Naive thymus-derived CD4-positive, alpha-beta T cell (primary cell): ENCODE measurements at regions of chr15 and their contacts with region 1.

Region 1: GRCh38 chr15:59688841-59689625 is at the start of gene BNIP2:
- DNase-seq: peak; percentile 94 to 100 (median 99)
- ATAC-seq: peak; percentile 95
- H3K4me3 ChIP-seq: peak within 1 kb of the TSS; percentile 97
- H3K4me3 Mint-ChIP-seq: peak within 1 kb of the TSS; percentile 90 to 98 (median 96)
- H3K27ac ChIP-seq: peak within 1 kb of the TSS; percentile 97
- H3K27ac Mint-ChIP-seq: peak within 1 kb of the TSS; percentile 81 to 99 (median 99)
- H3K4me1 ChIP-seq: peaks cover 29 to 30% of the 10 kb centered on the region in 2 donors
- H3K4me1 Mint-ChIP-seq: peaks cover 35 to 57% (median 49%) of the 10 kb centered on the region in 7 donors
- H3K27me3 ChIP-seq: no peaks in the 10 kb centered on the region
- H3K27me3 Mint-ChIP-seq: no peaks in the 10 kb centered on the region
- total RNA-seq, gene BNIP2: 76.1 to 116 (median 87.0) TPM

Region 2: DNA sequence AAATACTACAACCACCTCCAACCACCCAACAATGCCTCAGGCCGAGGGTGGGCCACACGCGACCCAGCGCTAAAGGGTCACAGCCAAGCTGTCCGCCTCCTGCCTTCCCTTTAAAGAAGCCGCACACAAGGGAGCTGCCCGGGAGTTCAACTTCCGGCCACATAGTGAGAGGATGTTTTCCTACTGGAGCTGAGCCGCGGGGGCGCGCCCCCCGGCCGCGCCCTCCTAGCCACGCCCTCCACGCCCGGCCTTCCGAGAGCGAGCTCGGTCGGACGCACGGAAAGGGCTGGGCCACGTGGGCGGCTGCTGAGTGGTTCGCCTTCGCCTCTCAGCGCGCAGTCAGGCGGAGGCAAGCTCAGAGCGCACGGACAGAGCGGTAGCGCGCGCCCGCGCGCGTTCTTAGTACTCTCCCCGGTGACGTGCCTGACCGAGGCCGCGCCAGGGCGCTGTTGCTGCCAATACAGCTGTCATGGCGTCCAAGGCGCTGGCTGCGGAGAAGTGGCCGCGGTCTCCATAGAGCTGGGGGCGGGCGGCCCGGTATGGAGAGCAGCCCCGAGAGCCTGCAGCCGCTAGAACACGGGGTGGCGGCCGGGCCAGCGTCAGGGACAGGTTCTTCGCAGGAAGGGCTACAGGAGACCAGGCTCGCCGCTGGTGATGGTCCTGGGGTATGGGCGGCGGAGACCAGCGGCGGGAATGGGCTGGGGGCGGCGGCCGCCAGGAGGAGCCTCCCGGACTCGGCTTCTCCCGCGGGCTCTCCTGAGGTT is 918.0 kb before region 1 on chr15 and contains the start of gene MINDY2:
- CTCF ChIA-PET with region 1: no interaction called
- POLR2A ChIA-PET with region 1: no interaction called
- intact Hi-C with region 1: loop called (anchors 2 to 5 kb)
- DNase-seq: peak; percentile 85 to 92 (median 90)
- ATAC-seq: peak; percentile 98
- H3K4me3 ChIP-seq: peak within 1 kb of the TSS; percentile 83
- H3K4me3 Mint-ChIP-seq: peak within 1 kb of the TSS in 2 of 10 donors; percentile 2 to 20
- H3K27ac ChIP-seq: peak within 1 kb of the TSS; percentile 90
- H3K27ac Mint-ChIP-seq: peak within 1 kb of the TSS in 7 of 9 donors; percentile 86 to 96 (median 93)
- H3K4me1 ChIP-seq: peaks cover 24 to 32% of the 10 kb centered on the region in 2 donors
- H3K4me1 Mint-ChIP-seq: peaks cover 0 to 21% (median 9%) of the 10 kb centered on the region in 7 donors
- H3K27me3 ChIP-seq: no peaks in the 10 kb centered on the region
- H3K27me3 Mint-ChIP-seq: no peaks in the 10 kb centered on the region
- total RNA-seq, gene MINDY2: 10.4 to 16.6 (median 11.5) TPM

Region 3: DNA sequence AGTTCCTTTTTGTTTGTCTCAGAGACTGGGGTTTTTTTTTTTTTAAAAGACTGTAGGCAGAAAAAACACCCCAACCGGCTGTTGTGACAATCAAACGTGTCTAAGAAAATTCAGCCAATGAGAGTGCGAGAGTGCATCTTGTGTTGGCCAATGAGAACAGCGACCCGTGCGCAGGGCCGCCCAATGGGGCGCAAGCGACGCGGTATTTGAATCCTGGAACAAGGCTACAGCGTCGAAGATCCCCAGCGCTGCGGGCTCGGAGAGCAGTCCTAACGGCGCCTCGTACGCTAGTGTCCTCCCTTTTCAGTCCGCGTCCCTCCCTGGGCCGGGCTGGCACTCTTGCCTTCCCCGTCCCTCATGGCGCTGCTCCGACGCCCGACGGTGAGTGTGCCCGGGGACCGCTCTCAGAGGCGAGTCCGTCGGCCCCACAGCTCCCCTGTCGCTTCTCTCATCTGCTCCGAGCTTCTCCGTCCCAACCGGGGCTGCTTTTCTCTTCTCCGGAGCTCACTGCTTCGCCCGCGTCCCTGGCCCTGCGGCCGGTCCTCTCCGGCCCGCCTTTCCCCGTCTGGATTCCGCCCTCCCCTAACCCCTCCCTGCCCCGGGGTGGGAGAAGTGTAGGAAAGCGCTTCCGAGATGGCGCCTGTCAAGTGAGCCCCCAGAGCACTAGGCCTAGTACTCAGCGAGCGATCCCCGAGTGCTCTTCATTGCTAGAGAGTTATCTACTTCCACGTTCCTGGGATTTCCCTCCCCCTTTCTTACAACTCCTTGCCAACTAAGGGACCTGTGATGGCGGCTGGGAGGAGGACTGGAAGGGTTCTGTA is 583.9 kb before region 1 on chr15 and contains the start of gene CCNB2:
- CTCF ChIA-PET with region 1: no interaction called
- POLR2A ChIA-PET with region 1: no interaction called
- intact Hi-C with region 1: loop called in 1 of 2 experiments (anchors 10 kb)
- DNase-seq: peak; percentile 63 to 91 (median 87)
- ATAC-seq: peak; percentile 100
- H3K4me3 ChIP-seq: peak within 1 kb of the TSS; percentile 77
- H3K4me3 Mint-ChIP-seq: peak within 1 kb of the TSS; percentile 89 to 100 (median 93)
- H3K27ac ChIP-seq: peak within 1 kb of the TSS; percentile 71
- H3K27ac Mint-ChIP-seq: peak within 1 kb of the TSS; percentile 94 to 100 (median 98)
- H3K4me1 ChIP-seq: peaks cover 7 to 11% of the 10 kb centered on the region in 2 donors
- H3K4me1 Mint-ChIP-seq: peaks cover 9 to 49% (median 13%) of the 10 kb centered on the region in 7 donors
- H3K27me3 ChIP-seq: no peaks in the 10 kb centered on the region
- H3K27me3 Mint-ChIP-seq: no peaks in the 10 kb centered on the region
- total RNA-seq, gene CCNB2: 0.27 to 52.2 (median 0.41) TPM

Region 4: DNA sequence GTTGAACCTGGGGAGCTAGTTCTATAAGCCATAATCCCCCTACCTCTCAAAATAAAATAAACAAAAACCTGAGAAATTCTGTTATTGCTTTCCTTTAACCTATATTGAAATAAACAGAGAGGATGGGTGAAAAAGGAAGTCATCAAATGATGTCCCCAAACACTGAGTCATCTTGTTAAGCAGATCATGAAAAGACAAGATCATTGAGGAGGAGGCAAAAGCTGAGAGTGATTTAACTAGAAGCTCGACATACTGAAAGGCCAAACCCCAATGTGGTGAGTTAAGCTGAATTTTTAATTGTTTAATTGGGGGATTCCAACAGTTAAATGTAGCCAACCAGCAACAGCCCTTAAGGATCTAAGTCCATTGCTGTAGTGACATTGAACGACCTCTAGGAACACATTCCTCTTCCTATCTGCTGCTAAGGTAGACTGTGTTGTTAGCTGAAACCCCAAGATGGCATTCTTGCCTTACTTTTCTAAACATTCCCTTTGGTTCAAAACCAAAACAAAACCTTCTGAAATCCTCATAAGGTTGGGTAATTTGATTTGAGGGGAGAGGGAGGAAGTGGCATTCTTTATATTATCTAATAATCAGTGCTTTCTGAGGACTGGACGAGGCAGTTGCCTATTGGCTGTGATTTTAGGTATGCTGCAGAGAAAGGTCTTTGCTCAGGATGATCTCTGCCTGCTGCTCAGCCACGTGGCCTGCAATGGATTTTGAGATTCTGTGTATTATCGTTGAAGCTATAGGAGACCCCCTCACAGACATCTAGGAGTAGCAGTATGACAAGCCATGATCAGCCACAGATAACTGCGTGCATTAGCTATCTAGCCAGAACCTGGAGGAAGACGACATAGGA is 62.8 kb after region 1 on chr15:
- CTCF ChIA-PET with region 1: interaction called, 3 read pairs
- POLR2A ChIA-PET with region 1: no interaction called
- intact Hi-C with region 1: loop called in 1 of 2 experiments (anchors 1 kb)
- DNase-seq: peak in 7 of 9 donors; percentile 47 to 77 (median 65)
- ATAC-seq: peak; percentile 96
- H3K4me3 ChIP-seq: no peak overlapping the region
- H3K4me3 Mint-ChIP-seq: no peak overlapping the region
- H3K27ac ChIP-seq: no peak overlapping the region
- H3K27ac Mint-ChIP-seq: peak overlapping the region in 6 of 9 donors; percentile 0 to 26 (median 6)
- H3K4me1 ChIP-seq: peaks cover 0 to 9% of the 10 kb centered on the region in 2 donors
- H3K4me1 Mint-ChIP-seq: peaks cover 4 to 18% (median 17%) of the 10 kb centered on the region in 7 donors
- H3K27me3 ChIP-seq: no peaks in the 10 kb centered on the region
- H3K27me3 Mint-ChIP-seq: peaks cover 0 to 23% (median 4%) of the 10 kb centered on the region in 5 donors

Region 5: GRCh38 chr15:60128000-60128376 is 439.0 kb after region 1 on chr15:
- CTCF ChIA-PET with region 1: interaction called, 3 read pairs
- POLR2A ChIA-PET with region 1: interaction called, 3 read pairs
- intact Hi-C with region 1: loop called (anchors 1 kb)
- DNase-seq: no peak
- ATAC-seq: no peak
- H3K4me3 ChIP-seq: peak overlapping the region; percentile 75
- H3K4me3 Mint-ChIP-seq: peak overlapping the region; percentile 81 to 94 (median 90)
- H3K27ac ChIP-seq: peak overlapping the region; percentile 72
- H3K27ac Mint-ChIP-seq: peak overlapping the region; percentile 83 to 100 (median 96)
- H3K4me1 ChIP-seq: peaks cover 12 to 21% of the 10 kb centered on the region in 2 donors
- H3K4me1 Mint-ChIP-seq: peaks cover 10 to 57% (median 44%) of the 10 kb centered on the region in 7 donors
- H3K27me3 ChIP-seq: no peaks in the 10 kb centered on the region
- H3K27me3 Mint-ChIP-seq: peaks cover 0 to 12% (median 0%) of the 10 kb centered on the region in 5 donors

Region 6: DNA sequence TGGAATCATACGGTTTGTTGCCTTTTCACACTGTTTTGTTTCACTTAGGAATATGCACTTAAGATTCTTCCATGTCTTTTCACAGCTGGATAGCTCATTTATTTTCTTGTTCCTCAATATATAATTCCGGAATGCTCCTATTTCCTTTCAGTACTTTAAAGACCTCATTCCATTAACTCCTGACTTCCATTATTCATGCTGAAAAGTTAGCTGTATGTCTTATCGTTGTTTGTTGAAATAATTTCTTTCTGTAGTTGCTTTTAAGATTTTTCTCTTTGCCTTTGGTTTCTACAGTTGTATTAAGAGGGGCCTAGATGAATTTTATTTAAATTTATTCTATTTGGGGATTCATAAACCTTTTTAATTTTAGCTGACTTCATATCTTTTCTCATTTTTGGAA is 586.6 kb after region 1 on chr15:
- CTCF ChIA-PET with region 1: no interaction called
- POLR2A ChIA-PET with region 1: no interaction called
- intact Hi-C with region 1: no loop called
- DNase-seq: no peak
- ATAC-seq: no peak
- H3K4me3 ChIP-seq: no peak overlapping the region
- H3K4me3 Mint-ChIP-seq: no peak overlapping the region
- H3K27ac ChIP-seq: no peak overlapping the region
- H3K27ac Mint-ChIP-seq: no peak overlapping the region
- H3K4me1 ChIP-seq: no peaks in the 10 kb centered on the region
- H3K4me1 Mint-ChIP-seq: no peaks in the 10 kb centered on the region
- H3K27me3 ChIP-seq: peaks cover 4 to 5% of the 10 kb centered on the region in 2 donors
- H3K27me3 Mint-ChIP-seq: peaks cover 18 to 45% (median 27%) of the 10 kb centered on the region in 5 donors

Region 7: DNA sequence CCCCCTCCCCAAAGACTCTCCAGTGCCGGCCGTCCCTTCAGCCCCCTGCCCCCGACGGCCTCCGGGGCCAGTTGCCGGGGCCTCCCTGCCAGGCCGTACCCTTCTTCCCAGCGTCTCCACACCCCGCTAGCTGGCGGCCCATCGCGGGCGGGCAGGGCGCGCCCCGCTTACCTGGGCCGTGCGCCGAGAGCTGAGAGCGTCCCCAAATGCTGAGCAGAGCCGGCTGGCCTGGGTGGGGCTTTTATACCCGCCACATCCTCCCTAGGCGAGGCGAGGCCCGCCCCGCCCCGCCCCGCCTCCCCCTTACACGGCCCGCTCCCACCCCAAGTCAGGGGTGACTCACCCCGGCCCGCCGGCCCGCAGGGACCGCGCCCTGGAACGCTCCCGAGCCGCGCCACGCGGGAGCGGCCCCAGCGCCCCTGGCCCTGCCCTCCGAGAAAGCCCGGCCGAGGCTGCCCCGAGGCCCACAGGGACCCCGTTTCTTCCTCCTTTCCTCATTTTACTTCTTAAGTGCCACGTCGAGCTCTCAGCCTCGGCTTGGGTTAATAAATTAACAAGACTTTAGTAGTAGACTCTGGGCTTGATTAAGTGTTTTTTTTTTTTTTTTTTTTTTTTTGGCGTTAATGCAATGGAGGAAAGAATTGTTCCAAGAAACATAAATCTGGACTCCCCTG is 708.9 kb after region 1 on chr15 and contains the start of gene ANXA2:
- CTCF ChIA-PET with region 1: no interaction called
- POLR2A ChIA-PET with region 1: interaction called, 3 read pairs
- intact Hi-C with region 1: loop called (anchors 1 kb)
- DNase-seq: peak; percentile 49 to 85 (median 62)
- ATAC-seq: peak; percentile 81
- H3K4me3 ChIP-seq: peak within 1 kb of the TSS; percentile 72
- H3K4me3 Mint-ChIP-seq: peak within 1 kb of the TSS; percentile 83 to 98 (median 87)
- H3K27ac ChIP-seq: peak within 1 kb of the TSS; percentile 61
- H3K27ac Mint-ChIP-seq: peak within 1 kb of the TSS; percentile 87 to 98 (median 95)
- H3K4me1 ChIP-seq: peaks cover 6 to 32% of the 10 kb centered on the region in 2 donors
- H3K4me1 Mint-ChIP-seq: peaks cover 10 to 67% (median 33%) of the 10 kb centered on the region in 7 donors
- H3K27me3 ChIP-seq: no peaks in the 10 kb centered on the region
- H3K27me3 Mint-ChIP-seq: peaks cover 0 to 7% (median 0%) of the 10 kb centered on the region in 5 donors
- total RNA-seq, gene ANXA2: 28.8 to 377 (median 42.4) TPM

Region 8: GRCh38 chr15:60840306-60840702 is 1151.3 kb after region 1 on chr15:
- CTCF ChIA-PET with region 1: no interaction called
- POLR2A ChIA-PET with region 1: no interaction called
- intact Hi-C with region 1: loop called in 1 of 2 experiments (anchors 10 kb)
- DNase-seq: no peak
- ATAC-seq: peak; percentile 1
- H3K4me3 ChIP-seq: peak overlapping the region; percentile 51
- H3K4me3 Mint-ChIP-seq: peak overlapping the region; percentile 75 to 90 (median 82)
- H3K27ac ChIP-seq: peak overlapping the region; percentile 68
- H3K27ac Mint-ChIP-seq: peak overlapping the region; percentile 89 to 97 (median 96)
- H3K4me1 ChIP-seq: peaks cover 61 to 62% of the 10 kb centered on the region in 2 donors
- H3K4me1 Mint-ChIP-seq: peaks cover 50 to 96% (median 77%) of the 10 kb centered on the region in 7 donors
- H3K27me3 ChIP-seq: no peaks in the 10 kb centered on the region
- H3K27me3 Mint-ChIP-seq: peaks cover 0 to 9% (median 0%) of the 10 kb centered on the region in 5 donors